ENCODE measurements at regions of chr1 and their contacts with region 1.

Region 1: GRCh38 chr1:174968750-174969244 is 30.9 kb upstream of the CACYBP start:
- DNase-seq: peak; percentile 43
- CTCF ChIP-seq: no peak

Region 2: GRCh38 chr1:174982971-174983689 is 14.3 kb after region 1 on chr1:
- CTCF ChIA-PET with region 1: interaction called, 20 read pairs
- POLR2A ChIA-PET with region 1: no interaction called
- DNase-seq: no peak
- CTCF ChIP-seq: peak; percentile 47